ENCODE measurements at regions of chr2 and their contacts with region 1.

Region 1: DNA sequence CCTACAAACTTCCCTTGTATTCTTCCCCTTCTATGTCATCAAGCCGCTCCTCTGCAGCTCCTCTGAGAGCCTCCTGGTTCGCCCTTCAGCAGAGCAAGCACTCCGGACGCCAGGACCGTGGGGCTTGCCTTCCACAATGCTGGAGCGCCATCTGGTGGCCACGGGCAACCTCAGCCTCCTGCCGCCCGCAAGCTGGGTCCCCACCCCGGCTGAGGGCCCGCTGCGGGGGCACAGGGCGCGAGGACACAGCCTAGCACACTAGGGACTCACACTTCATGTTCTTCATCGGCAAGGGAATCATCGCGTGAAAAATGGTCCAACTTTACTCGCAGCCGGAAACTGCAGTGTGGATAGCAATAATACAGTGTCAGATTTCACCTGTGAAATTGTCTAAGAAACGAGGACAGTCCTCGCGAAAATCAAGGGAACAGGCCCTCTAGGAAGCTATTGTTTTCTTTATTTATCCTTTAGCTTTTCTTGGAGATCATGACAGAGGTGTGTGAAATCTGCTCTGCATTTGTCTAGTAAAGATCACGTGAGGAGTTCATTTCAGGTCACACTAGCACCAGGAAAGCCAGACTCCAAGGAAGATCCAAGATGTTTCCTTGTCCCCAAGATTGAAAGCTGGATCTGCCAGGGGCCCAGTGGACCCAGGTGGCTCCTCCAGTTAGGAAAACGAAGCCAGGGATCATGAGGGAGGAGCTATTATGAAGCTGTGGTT is 5.8 kb downstream of the PRLH start:
- DNase-seq: peak; percentile 91
- H3K4me3 Mint-ChIP-seq: no peak overlapping the region
- H3K27ac Mint-ChIP-seq: no peak overlapping the region
- H3K4me1 Mint-ChIP-seq: no peaks in the 10 kb centered on the region
- H3K27me3 Mint-ChIP-seq: peaks cover 13% of the 10 kb centered on the region

Region 2: GRCh38 chr2:237122214-237122666 is 449.9 kb before region 1 on chr2:
- CTCF ChIA-PET with region 1: interaction called, 27 read pairs
- POLR2A ChIA-PET with region 1: no interaction called
- intact Hi-C with region 1: loop called (anchors 1 kb)
- DNase-seq: peak; percentile 81
- H3K4me3 Mint-ChIP-seq: no peak overlapping the region
- H3K27ac Mint-ChIP-seq: no peak overlapping the region
- H3K4me1 Mint-ChIP-seq: peaks cover 3% of the 10 kb centered on the region
- H3K27me3 Mint-ChIP-seq: no peaks in the 10 kb centered on the region

Region 3: DNA sequence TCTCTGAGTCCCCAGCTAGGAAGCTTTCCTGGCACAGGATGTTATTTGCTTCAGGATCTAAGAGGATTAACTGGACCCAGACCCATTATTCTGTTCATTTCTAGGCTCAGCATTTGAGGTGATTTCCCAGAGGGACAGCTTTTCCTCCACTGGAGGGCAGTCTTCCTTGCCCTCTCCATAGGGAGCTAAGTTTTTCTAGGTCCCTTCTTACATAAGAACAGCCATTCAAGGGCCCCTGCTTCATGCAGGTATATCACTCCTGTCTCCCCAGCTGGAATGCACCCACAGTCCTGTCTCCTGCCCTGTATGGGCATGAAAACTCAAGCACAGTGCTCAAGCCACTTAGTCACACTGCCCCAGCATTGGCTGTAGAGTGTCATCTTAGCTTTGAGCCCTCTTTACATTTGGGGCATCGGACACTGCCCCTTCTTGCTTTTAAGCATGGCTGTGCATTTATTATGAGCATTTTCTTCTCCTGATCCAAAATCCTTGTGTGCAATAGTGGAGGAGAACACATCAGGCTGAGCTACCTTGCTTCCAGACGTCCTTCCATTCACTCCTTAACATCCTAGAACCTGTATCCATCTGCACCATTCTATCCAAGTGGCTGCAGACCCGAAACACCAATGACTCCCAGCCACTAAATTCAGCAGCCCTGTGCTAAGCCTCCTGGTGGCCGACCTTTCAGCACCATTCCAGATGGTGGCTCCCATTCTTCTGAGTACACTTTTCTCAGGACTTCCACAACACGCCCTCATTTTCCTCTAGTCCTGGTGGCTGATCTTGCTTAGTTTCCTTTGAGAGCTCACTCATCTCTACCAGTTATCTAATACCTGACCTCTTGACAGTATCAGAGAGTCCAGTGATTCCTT is 406.5 kb before region 1 on chr2:
- CTCF ChIA-PET with region 1: interaction called, 11 read pairs
- POLR2A ChIA-PET with region 1: no interaction called
- intact Hi-C with region 1: no loop called
- DNase-seq: no peak
- H3K4me3 Mint-ChIP-seq: no peak overlapping the region
- H3K27ac Mint-ChIP-seq: no peak overlapping the region
- H3K4me1 Mint-ChIP-seq: no peaks in the 10 kb centered on the region
- H3K27me3 Mint-ChIP-seq: peaks cover 5% of the 10 kb centered on the region

Region 4: DNA sequence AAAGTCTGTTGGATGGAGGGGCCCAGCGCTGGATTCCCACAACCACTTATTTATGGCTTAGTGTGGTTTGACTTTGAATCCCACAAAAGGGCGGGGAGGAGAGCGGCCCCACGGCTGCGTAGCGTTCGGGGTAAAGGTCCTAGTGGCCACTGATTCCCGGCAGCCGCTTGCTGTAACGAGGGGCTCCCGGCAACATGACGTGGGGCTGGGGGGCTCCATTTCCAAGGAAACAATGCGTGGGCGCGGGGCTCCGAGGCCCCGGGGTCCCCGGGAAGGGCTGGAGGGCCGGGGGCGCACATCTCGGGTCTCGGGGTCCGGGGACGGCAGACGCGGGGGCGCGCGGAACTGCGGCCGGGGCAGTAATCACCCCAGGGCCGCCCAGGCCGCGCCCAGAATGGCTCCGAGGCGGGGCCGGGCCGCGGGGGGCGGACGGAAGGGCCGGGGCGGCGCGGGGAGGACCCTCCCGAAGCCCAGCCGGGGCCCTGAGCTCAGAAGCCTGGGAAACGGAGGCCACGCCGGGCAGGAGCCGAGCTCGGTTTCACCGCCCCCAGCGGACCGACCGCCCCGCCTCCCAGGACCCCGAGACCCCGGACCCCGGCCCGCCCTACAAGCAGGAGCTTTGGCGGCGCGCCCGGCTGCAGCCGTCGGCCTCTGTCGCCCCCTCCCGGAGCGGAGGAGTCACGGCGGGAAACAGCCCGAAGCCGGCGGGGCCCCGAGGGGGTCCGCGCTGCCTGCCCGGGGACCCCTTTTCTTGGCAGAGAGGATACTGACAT is 97.1 kb before region 1 on chr2:
- CTCF ChIA-PET with region 1: interaction called, 9 read pairs
- POLR2A ChIA-PET with region 1: no interaction called
- intact Hi-C with region 1: loop called (anchors 1 kb)
- DNase-seq: peak; percentile 79
- H3K4me3 Mint-ChIP-seq: peak overlapping the region; percentile 68
- H3K27ac Mint-ChIP-seq: peak overlapping the region; percentile 78
- H3K4me1 Mint-ChIP-seq: peaks cover 10% of the 10 kb centered on the region
- H3K27me3 Mint-ChIP-seq: peaks cover 18% of the 10 kb centered on the region

Region 5: DNA sequence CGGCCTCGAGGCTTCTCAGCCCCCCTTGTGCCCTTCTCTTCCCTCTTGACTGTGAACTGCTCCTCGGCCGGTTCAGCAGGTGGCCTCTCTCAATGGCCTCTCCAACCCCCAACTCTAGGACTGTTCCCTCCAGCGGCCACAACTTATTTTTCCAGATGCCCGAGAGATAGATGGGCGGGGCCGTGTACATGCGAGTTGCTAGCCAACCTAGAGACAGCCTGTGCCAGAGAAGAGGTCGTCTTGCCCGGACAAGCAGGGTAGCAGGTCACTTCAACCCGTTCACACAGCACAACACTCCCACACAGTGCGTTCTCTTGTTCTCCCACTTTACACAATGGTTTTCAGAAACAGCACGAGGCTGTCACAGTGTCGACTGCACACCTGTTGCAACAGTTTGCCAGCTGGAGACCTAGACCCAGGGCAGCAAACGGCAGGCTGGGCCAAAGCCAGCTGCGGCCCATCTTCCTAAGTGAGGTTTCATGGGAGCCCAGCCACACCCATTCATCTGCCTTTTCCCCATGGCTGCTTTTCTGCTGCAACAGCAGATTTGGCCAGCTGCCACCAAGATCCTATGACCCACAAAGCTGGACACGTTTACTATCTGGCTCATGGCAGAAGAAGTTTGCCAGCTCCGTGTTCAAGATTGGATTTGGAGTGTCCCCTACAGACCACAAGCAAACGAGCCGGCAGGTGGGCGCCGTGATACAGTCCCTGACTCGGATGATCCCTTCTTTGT is 13.1 kb before region 1 on chr2:
- CTCF ChIA-PET with region 1: interaction called, 22 read pairs
- POLR2A ChIA-PET with region 1: no interaction called
- intact Hi-C with region 1: no loop called
- DNase-seq: no peak
- H3K4me3 Mint-ChIP-seq: no peak overlapping the region
- H3K27ac Mint-ChIP-seq: no peak overlapping the region
- H3K4me1 Mint-ChIP-seq: peaks cover 13% of the 10 kb centered on the region
- H3K27me3 Mint-ChIP-seq: peaks cover 16% of the 10 kb centered on the region

Region 6: DNA sequence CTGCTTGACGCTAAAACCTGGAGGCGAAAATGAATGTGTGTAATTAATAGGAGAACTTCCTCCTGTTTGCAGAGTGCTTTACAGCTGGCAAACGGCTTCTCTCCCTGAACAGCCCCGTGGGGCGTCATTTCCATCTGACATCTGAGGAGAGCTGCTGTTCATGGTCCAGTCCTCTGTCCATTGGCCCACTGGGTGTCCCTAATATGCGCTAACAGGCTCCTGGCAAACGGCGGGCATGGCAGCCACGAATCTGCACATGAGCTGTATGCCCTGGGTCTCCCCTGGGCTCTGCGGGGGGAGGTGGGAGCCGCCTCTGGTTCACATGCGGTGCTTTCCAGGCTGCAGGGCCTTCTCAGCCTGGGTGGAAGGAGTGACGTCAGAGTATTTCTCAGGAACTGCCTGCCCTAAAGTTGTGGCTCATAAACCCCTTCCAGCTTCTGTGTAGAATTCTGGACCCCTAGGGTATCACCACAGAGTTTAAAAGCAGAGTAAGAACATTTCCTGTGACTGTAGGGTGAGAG is 128.4 kb after region 1 on chr2:
- CTCF ChIA-PET with region 1: no interaction called
- POLR2A ChIA-PET with region 1: no interaction called
- intact Hi-C with region 1: no loop called
- DNase-seq: peak; percentile 90
- H3K4me3 Mint-ChIP-seq: peak overlapping the region; percentile 54
- H3K27ac Mint-ChIP-seq: peak overlapping the region; percentile 98
- H3K4me1 Mint-ChIP-seq: peaks cover 94% of the 10 kb centered on the region
- H3K27me3 Mint-ChIP-seq: no peaks in the 10 kb centered on the region

Region 7: GRCh38 chr2:237744613-237745249 is 172.6 kb after region 1 on chr2:
- CTCF ChIA-PET with region 1: interaction called, 12 read pairs
- POLR2A ChIA-PET with region 1: no interaction called
- intact Hi-C with region 1: no loop called
- DNase-seq: peak; percentile 86
- H3K4me3 Mint-ChIP-seq: no peak overlapping the region
- H3K27ac Mint-ChIP-seq: peak overlapping the region; percentile 76
- H3K4me1 Mint-ChIP-seq: peaks cover 39% of the 10 kb centered on the region
- H3K27me3 Mint-ChIP-seq: no peaks in the 10 kb centered on the region